ENCODE measurements at regions of chrX and their contacts with region 1.

Region 1: DNA sequence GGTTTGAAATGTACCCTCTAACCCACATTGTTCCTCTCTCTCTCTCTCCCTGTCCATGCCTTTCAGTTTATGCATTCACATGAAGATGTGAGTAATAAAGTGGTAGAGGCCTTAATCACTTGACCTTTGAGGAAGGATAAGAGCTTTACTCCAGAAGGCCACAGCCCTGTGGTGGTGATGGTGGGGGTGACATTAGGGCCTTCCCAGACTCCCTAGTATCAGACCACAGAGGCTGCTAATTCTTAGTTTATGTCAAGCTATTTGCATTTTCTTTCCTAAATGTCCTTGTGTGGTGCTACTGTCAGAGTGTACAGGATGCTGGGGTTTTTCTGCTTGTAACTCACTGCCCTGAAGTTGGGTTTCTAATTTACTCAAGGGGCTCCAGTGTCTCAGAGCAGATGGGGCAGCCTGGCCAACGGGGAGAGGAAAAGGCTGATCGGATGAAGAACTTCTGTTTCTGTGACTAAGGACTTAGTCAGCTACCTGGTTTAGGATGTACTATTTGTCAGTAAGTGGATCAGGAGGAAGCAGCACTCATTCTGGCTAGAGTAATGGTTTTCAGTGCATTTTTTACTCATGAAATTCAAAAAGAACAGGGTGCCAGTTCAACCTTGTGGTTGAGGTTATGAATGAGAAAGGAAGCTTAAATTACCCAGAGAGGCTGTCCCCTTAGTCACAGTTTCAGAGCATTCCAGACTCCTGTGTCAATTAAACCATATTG is 509.6 kb upstream of the DIPK2B start:
- DNase-seq: peak; percentile 99
- ATAC-seq: peak; percentile 87
- H3K4me3 ChIP-seq: no peak overlapping the region
- H3K27ac ChIP-seq: peak overlapping the region; percentile 99
- H3K4me1 ChIP-seq: peaks cover 44 to 66% of the 10 kb centered on the region in 2 experiments
- H3K27me3 ChIP-seq: no peaks in the 10 kb centered on the region
- CTCF ChIP-seq: no peak
- POLR2A ChIP-seq: no peak
- RAD21 ChIP-seq: no peak

Region 2: GRCh38 chrX:45505214-45505613 is 205.0 kb before region 1 on chrX:
- CTCF ChIA-PET with region 1: no interaction called
- POLR2A ChIA-PET with region 1: no interaction called
- RAD21 ChIA-PET with region 1: no interaction called
- intact Hi-C with region 1: loop called (anchors 1 kb)
- DNase-seq: no peak
- ATAC-seq: no peak
- H3K4me3 ChIP-seq: no peak overlapping the region
- H3K27ac ChIP-seq: peak overlapping the region; percentile 96
- H3K4me1 ChIP-seq: peaks cover 26 to 45% of the 10 kb centered on the region in 2 experiments
- H3K27me3 ChIP-seq: no peaks in the 10 kb centered on the region
- CTCF ChIP-seq: no peak
- POLR2A ChIP-seq: no peak
- RAD21 ChIP-seq: no peak

Region 3: GRCh38 chrX:45668686-45669443 is 41.4 kb before region 1 on chrX:
- CTCF ChIA-PET with region 1: no interaction called
- POLR2A ChIA-PET with region 1: interaction called, 3 read pairs
- RAD21 ChIA-PET with region 1: no interaction called
- intact Hi-C with region 1: loop called (anchors 2 kb)
- DNase-seq: peak; percentile 78
- ATAC-seq: peak; percentile 87
- H3K4me3 ChIP-seq: 0 out of 4 replicates have a peak overlapping the region, but pooled peaks of 1 of the 2 experiments have one; percentile 13
- H3K27ac ChIP-seq: peak overlapping the region; percentile 89
- H3K4me1 ChIP-seq: peaks cover 19 to 41% of the 10 kb centered on the region in 2 experiments
- H3K27me3 ChIP-seq: no peaks in the 10 kb centered on the region
- CTCF ChIP-seq: no peak
- POLR2A ChIP-seq: no peak
- RAD21 ChIP-seq: no peak

Region 4: DNA sequence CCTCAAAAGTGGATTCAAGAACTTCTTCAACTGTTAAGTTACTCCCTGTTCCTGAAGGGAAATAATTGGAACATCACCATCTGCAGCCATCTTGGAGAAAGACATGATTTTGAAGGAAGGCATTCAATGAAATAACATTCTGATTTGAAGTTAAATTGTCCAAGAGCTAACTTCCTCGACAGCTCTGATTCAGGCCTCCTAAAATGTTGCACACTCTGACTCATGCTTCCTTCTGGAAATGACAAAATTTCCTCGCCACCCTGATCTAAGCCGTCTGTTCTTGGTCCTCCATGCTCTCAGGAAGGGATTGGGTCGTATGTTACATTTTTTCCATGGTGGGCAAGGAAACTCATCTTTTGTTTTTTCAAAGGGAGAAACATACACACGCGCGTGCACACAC is 12.7 kb before region 1 on chrX:
- CTCF ChIA-PET with region 1: no interaction called
- POLR2A ChIA-PET with region 1: interaction called, 13 read pairs
- RAD21 ChIA-PET with region 1: no interaction called
- intact Hi-C with region 1: no loop called
- DNase-seq: no peak
- ATAC-seq: no peak
- H3K4me3 ChIP-seq: no peak overlapping the region
- H3K27ac ChIP-seq: no peak overlapping the region
- H3K4me1 ChIP-seq: peaks cover 0 to 13% of the 10 kb centered on the region in 2 experiments; a peak in 2 of 4 replicates
- H3K27me3 ChIP-seq: no peaks in the 10 kb centered on the region
- CTCF ChIP-seq: no peak
- POLR2A ChIP-seq: no peak
- RAD21 ChIP-seq: no peak

Region 5: GRCh38 chrX:45743081-45743533 is 32.9 kb after region 1 on chrX:
- CTCF ChIA-PET with region 1: interaction called, 3 read pairs
- POLR2A ChIA-PET with region 1: interaction called, 4 read pairs
- RAD21 ChIA-PET with region 1: interaction called in 1 of 2 experiments, 3 read pairs
- intact Hi-C with region 1: loop called (anchors 2 kb)
- DNase-seq: peak; percentile 76
- ATAC-seq: peak; percentile 79
- H3K4me3 ChIP-seq: no peak overlapping the region
- H3K27ac ChIP-seq: peak overlapping the region; percentile 94
- H3K4me1 ChIP-seq: peaks cover 12 to 63% of the 10 kb centered on the region in 2 experiments
- H3K27me3 ChIP-seq: no peaks in the 10 kb centered on the region
- CTCF ChIP-seq: peak in 2 of 3 experiments; percentile 46 to 50; a peak in 4 of 6 replicates
- POLR2A ChIP-seq: no peak
- RAD21 ChIP-seq: no peak

Region 6: DNA sequence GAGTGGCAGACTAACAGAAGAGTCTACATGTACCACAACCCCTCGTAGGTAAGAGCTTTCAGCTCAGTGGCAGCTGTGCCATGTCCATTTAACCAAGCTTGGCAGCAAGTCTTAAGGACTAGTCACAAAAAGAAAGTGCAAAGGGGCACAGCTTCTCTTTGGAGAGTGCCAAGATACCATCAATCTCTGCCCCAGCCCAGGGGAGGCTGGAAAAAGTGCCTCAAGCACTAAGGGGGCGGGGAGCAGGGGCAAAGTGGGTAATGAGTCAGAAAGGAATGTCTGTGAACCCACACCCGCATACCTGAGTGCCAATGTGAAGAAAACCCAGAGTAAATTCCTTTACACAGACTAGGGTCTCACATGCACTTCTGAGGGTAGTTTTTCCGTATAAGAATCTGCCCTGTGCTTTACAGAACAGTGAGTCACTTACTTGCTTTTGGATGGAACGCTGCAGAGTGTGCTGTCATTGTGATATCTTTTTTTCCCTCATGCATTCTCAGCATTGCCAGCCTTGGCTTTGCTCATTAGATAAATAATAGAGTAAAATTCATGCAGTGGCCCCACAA is 615.2 kb after region 1 on chrX:
- CTCF ChIA-PET with region 1: no interaction called
- POLR2A ChIA-PET with region 1: no interaction called
- RAD21 ChIA-PET with region 1: interaction called in 1 of 2 experiments, 7 read pairs
- intact Hi-C with region 1: loop called (anchors 5 kb)
- DNase-seq: peak; percentile 86
- ATAC-seq: peak; percentile 65
- H3K4me3 ChIP-seq: peak overlapping the region in 1 of 2 experiments; percentile 26; a peak in 1 of 4 replicates
- H3K27ac ChIP-seq: peak overlapping the region; percentile 88
- H3K4me1 ChIP-seq: peaks cover 66 to 98% of the 10 kb centered on the region in 2 experiments
- H3K27me3 ChIP-seq: no peaks in the 10 kb centered on the region
- CTCF ChIP-seq: no peak
- POLR2A ChIP-seq: no peak
- RAD21 ChIP-seq: no peak